Activated T-helper 2 cell treated with anti-CD3 and anti-CD28 coated beads, Interferon-gamma antibody, Interleukin-2, Interleukin-4, amounts not matched to agents 10 μg/mL and 5 μg/mL and 100 μg/mL, durations not matched to agents 14 hours and 24 hours and 36 hours (primary cell): ENCODE measurements at regions of chr19 and their contacts with region 1.

Region 1: GRCh38 chr19:43595999-43596841 is at the starts of genes IRGQ and ZNF576:
- DNase-seq: peak; percentile 100
- H3K4me3 Mint-ChIP-seq: peak within 1 kb of the TSS; percentile 91
- H3K27ac Mint-ChIP-seq: peak within 1 kb of the TSS; percentile 91
- H3K4me1 Mint-ChIP-seq: peaks cover 27% of the 10 kb centered on the region
- H3K27me3 Mint-ChIP-seq: no peaks in the 10 kb centered on the region
- total RNA-seq, gene IRGQ: 27.8 and 32.7 TPM in 2 replicates
- total RNA-seq, gene ZNF576: 14.5 and 14.8 TPM in 2 replicates

Region 2: DNA sequence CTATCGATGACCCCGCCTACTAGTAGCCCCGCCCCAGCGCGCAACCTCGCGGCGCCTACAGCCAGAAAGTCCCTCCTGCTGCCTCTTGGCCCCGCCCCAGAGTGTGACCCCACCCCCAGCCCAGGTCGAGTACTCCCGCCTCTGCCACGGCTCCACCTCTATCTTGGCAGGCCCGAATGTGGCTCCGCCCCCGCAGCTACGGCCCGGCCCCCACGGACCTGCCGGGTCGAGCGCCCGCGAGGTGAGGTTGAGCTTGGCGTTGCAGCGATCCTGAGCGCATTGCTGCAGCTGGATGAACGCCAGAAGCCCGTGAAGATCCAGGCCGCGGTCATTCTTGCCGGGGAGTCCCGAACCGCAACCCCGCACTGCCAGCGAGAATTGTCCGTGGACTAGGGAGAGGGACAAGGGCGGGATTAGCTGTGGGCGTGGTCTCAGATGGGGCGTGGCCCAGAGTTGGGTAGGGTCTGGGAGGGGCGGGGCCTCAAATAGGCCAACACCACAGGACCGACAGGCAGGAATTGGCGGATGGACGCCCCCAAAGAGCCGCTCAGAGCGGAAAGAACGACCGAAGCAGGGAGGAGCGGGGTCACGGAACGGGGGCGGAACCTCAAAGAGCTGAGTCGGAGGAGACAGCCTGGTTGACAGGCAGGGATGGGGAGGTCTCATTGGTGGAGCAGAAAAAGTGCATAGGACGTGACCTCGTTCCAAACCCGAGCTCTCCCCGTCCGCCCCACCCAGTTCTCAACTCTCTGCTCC is 132.7 kb before region 1 on chr19:
- intact Hi-C with region 1: loop called (anchors 5 kb)
- DNase-seq: peak; percentile 96
- H3K4me3 Mint-ChIP-seq: peak overlapping the region; percentile 89
- H3K27ac Mint-ChIP-seq: peak overlapping the region; percentile 96
- H3K4me1 Mint-ChIP-seq: peaks cover 29% of the 10 kb centered on the region
- H3K27me3 Mint-ChIP-seq: no peaks in the 10 kb centered on the region

Region 3: GRCh38 chr19:43526884-43527859 is 69.0 kb before region 1 on chr19 and contains the start of gene ETHE1:
- intact Hi-C with region 1: loop called (anchors 2 kb)
- DNase-seq: peak; percentile 76
- H3K4me3 Mint-ChIP-seq: peak within 1 kb of the TSS; percentile 87
- H3K27ac Mint-ChIP-seq: peak within 1 kb of the TSS; percentile 97
- H3K4me1 Mint-ChIP-seq: peaks cover 12% of the 10 kb centered on the region
- H3K27me3 Mint-ChIP-seq: no peaks in the 10 kb centered on the region
- total RNA-seq, gene ETHE1: 64.6 and 65.5 TPM in 2 replicates

Region 4: DNA sequence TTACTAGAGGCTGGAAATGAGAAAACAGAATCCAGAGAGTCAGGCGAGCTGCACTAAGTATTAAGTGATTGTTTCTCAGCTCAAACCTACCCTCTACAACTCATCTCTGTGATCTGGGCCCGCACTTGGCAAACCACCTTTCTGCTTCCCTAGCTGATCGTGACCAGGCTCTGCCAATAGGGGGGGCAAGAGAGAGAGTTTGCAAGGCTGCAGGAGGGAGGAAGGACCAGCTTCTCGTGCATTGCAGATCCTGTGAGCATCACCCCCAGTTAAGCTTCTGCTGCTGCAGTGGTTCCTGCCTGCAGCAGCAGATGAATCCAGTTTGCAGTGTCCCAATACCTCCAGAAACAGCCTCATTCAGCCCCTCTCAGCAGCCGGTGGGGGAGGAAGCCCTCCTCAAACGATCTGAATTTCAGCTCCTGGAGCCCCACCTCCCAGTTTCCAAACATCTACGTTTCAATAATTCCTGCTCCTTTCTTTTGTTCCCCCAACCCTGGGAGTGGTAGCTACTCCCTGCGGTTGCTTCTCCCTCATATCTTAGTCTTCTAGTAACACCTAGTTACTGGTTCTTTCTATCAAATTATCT is 40.9 kb before region 1 on chr19:
- intact Hi-C with region 1: loop called (anchors 2 kb)
- DNase-seq: peak; percentile 72
- H3K4me3 Mint-ChIP-seq: no peak overlapping the region
- H3K27ac Mint-ChIP-seq: peak overlapping the region; percentile 10
- H3K4me1 Mint-ChIP-seq: peaks cover 5% of the 10 kb centered on the region
- H3K27me3 Mint-ChIP-seq: no peaks in the 10 kb centered on the region

Region 5: DNA sequence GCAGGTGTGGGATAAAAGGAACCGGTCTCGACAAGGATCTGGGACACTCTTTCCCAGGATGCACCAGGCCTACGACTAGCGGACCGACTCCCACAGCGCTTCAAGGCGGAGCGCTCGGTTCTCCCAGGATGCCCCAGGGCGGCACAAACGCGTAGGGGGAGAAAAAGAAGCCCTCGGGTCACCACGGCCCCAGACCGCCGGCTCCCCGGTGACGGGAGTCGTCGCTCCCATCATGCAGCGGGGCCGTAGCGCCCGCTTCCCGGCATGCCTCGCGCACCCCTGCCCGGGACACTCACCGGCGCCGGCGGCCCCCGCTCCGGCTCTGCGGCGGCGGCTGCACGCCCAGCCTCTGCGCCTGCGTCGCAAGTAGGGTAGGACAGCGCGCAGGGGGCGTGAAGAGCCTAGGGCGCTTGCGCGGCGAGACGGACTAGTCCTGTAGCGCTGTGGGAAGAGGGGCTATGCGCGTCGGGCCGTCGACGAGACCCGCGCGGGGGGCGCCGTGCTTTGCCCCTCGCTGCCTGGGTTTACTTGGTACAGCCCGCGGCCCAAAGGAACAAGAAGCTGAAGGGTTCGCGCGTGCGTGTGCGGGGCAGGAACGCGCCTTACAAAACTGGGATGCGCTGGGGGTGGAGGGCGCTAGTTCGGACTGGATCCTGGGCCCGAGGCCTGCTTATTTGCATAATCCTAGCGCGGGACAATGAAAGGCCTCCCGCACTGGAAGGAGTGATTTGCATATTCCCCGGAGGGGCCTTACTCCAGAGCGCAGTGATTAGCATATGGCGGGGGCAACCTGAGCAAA is 23.2 kb after region 1 on chr19 and contains the start of gene ZNF428:
- intact Hi-C with region 1: loop called (anchors 1 kb)
- DNase-seq: peak; percentile 86
- H3K4me3 Mint-ChIP-seq: peak within 1 kb of the TSS; percentile 90
- H3K27ac Mint-ChIP-seq: peak within 1 kb of the TSS; percentile 96
- H3K4me1 Mint-ChIP-seq: peaks cover 18% of the 10 kb centered on the region
- H3K27me3 Mint-ChIP-seq: no peaks in the 10 kb centered on the region
- total RNA-seq, gene ZNF428: 17.7 and 19.1 TPM in 2 replicates

Region 6: DNA sequence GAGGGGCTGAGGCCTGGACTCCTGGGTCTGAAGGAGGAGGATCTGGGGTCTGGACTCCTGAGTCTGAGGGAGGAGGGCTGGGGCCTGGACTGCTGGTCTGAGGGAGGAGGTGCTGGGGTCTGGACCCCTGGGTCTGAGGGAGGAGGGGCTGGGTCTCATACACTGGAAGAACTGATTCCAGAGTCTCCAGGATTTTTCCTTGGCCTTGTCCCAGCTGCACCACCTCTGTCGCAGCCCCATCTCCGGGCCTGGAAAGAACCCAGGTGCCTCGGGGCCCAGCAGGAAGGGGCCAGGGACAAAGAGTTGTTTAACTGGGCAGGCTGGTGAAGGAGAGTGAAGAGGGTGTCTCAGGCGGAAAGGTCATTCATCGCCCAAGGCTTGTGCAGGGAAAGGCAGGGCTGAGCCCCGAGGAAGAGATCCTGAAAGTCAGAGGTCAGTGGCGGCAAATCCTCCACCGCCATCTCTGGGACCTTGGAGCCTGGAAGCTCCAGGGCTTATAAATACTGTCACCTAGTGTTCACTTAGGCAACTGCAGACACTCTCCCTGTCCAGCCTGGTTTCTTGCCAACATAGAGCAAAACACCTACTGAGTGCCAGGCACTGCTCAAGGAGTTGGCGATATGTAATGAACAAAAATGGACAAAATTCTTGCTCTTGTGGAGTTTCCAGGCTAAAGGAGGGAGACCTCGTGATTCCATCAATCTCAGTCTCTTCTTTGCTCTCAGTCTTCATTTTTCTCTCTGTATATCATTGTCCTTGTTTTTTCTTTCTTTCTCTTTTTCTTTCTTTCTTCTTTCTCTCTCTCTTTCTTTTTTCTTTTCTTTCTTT is 189.0 kb after region 1 on chr19:
- intact Hi-C with region 1: loop called (anchors 10 kb)
- DNase-seq: peak; percentile 36
- H3K4me3 Mint-ChIP-seq: peak overlapping the region; percentile 55
- H3K27ac Mint-ChIP-seq: peak overlapping the region; percentile 82
- H3K4me1 Mint-ChIP-seq: peaks cover 41% of the 10 kb centered on the region
- H3K27me3 Mint-ChIP-seq: peaks cover 5% of the 10 kb centered on the region

Region 7: DNA sequence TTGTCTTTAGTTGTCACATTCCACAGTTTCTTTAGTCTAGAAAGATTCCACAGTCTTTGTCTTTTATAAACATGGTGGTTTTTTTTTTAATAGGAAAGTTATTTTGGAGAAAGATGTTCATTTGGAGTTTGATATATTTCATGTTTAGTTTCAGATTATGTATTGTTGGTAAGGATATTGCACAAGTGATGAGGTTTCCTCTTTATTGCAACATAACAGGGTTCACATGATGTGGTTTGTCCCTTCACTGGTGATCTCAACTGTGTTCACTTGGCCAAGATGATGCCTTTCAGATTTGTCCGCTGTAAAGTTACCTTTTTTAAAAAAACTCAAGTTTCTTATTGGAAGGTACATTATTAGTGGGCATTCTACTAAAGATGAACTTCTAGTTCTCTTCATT is 409.8 kb after region 1 on chr19:
- intact Hi-C with region 1: no loop called
- DNase-seq: no peak
- H3K4me3 Mint-ChIP-seq: no peak overlapping the region
- H3K27ac Mint-ChIP-seq: no peak overlapping the region
- H3K4me1 Mint-ChIP-seq: peaks cover 15% of the 10 kb centered on the region
- H3K27me3 Mint-ChIP-seq: no peaks in the 10 kb centered on the region